Naive thymus-derived CD4-positive, alpha-beta T cell (primary cell): ENCODE measurements at regions of chr2 and their contacts with region 1.

Region 1: DNA sequence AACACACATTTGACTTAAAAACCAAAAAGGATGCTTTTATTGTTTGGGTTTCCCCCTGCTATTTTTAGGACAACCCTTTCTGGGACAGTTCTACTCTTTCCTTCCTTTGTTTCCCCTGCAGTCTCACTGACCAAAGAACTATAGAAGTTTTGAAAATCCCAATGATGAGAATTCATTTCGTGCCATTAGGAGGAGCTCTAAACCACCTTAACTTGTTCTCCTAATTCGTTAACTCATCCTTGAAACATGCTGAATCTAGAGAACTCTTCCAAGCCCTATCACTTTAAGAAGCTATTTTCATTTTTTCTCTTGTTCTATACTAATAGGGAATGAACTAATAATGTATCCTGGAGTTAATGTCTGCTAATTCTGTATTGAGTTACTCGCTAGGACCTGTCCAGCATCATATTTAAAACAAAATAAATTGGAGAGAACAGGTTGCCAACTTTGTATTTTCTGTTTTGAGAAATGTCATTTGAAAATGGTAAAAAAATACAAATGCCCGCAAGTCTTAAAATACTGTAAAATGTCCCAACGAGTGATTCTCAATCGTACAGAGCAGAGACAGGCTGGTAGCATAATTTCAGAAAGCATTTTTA is 62.9 kb downstream of the AFTPH start:
- DNase-seq: peak in 6 of 9 donors; percentile 30 to 55 (median 42)
- ATAC-seq: peak; percentile 72
- H3K4me3 ChIP-seq: no peak overlapping the region
- H3K4me3 Mint-ChIP-seq: no peak overlapping the region
- H3K27ac ChIP-seq: no peak overlapping the region
- H3K27ac Mint-ChIP-seq: peak overlapping the region in 1 of 9 donors; percentile 64
- H3K4me1 ChIP-seq: no peaks in the 10 kb centered on the region
- H3K4me1 Mint-ChIP-seq: peaks cover 0 to 14% (median 5%) of the 10 kb centered on the region in 7 donors
- H3K27me3 ChIP-seq: no peaks in the 10 kb centered on the region
- H3K27me3 Mint-ChIP-seq: no peaks in the 10 kb centered on the region

Region 2: GRCh38 chr2:63661076-63661475 is 925.9 kb before region 1 on chr2:
- CTCF ChIA-PET with region 1: no interaction called
- POLR2A ChIA-PET with region 1: no interaction called
- intact Hi-C with region 1: no loop called
- DNase-seq: no peak
- ATAC-seq: no peak
- H3K4me3 ChIP-seq: no peak overlapping the region
- H3K4me3 Mint-ChIP-seq: no peak overlapping the region
- H3K27ac ChIP-seq: no peak overlapping the region
- H3K27ac Mint-ChIP-seq: no peak overlapping the region
- H3K4me1 ChIP-seq: no peaks in the 10 kb centered on the region
- H3K4me1 Mint-ChIP-seq: peaks cover 0 to 3% (median 0%) of the 10 kb centered on the region in 7 donors
- H3K27me3 ChIP-seq: peaks cover 0 to 5% of the 10 kb centered on the region in 2 donors
- H3K27me3 Mint-ChIP-seq: peaks cover 6 to 28% (median 20%) of the 10 kb centered on the region in 5 donors

Region 3: GRCh38 chr2:64491426-64491825 is 95.6 kb before region 1 on chr2:
- CTCF ChIA-PET with region 1: no interaction called
- POLR2A ChIA-PET with region 1: no interaction called
- intact Hi-C with region 1: no loop called
- DNase-seq: no peak
- ATAC-seq: no peak
- H3K4me3 ChIP-seq: no peak overlapping the region
- H3K4me3 Mint-ChIP-seq: no peak overlapping the region
- H3K27ac ChIP-seq: no peak overlapping the region
- H3K27ac Mint-ChIP-seq: no peak overlapping the region
- H3K4me1 ChIP-seq: no peaks in the 10 kb centered on the region
- H3K4me1 Mint-ChIP-seq: peaks cover 3 to 14% (median 9%) of the 10 kb centered on the region in 7 donors
- H3K27me3 ChIP-seq: no peaks in the 10 kb centered on the region
- H3K27me3 Mint-ChIP-seq: peaks cover 0 to 42% (median 7%) of the 10 kb centered on the region in 5 donors

Region 4: DNA sequence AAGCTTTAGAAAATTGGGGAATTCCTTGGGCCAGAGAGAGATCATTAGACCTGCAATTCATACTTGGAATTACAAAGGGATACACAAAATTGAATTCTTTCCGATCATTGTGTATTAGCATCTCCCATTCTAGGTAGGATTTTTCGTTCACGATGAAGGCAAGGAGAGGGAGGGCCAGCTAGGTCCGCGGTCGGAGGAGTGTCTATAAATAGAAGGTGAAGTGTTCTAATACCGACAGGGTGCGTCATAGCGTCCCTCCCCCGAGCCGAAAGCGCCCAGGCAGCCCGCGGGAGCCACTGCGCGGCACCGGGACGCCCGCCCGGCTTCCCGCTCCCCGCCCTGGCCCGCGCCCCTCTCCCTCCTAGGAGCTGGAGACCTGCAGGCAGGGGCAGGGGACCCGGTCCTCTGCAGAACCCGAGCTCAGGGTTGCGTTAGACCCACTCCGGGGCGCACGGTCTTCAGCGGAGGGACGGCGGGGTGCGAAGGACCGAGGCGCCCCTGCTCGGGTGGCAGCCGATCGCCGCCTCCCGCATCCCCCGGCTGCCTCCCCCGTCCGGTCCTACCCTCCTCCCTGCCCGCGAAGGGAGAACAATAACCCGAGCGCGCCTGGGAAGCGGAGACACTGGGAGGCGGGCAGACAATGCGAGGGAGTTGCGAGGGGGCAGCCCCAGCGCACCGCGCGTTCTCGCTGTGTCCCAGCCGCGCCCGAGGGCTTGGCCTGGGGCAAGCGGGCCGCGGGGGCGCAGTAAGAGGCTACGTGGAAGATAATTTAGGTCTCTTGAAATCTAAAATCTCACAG is 180.9 kb after region 1 on chr2:
- CTCF ChIA-PET with region 1: no interaction called
- POLR2A ChIA-PET with region 1: interaction called, 3 read pairs
- intact Hi-C with region 1: loop called in 1 of 2 experiments (anchors 5 kb)
- DNase-seq: peak; percentile 35 to 78 (median 55)
- ATAC-seq: peak; percentile 89
- H3K4me3 ChIP-seq: peak overlapping the region; percentile 80
- H3K4me3 Mint-ChIP-seq: peak overlapping the region; percentile 90 to 99 (median 96)
- H3K27ac ChIP-seq: peak overlapping the region; percentile 73
- H3K27ac Mint-ChIP-seq: peak overlapping the region; percentile 92 to 97 (median 95)
- H3K4me1 ChIP-seq: peaks cover 3 to 12% of the 10 kb centered on the region in 2 donors
- H3K4me1 Mint-ChIP-seq: peaks cover 9 to 40% (median 23%) of the 10 kb centered on the region in 7 donors
- H3K27me3 ChIP-seq: no peaks in the 10 kb centered on the region
- H3K27me3 Mint-ChIP-seq: peaks cover 0 to 15% (median 0%) of the 10 kb centered on the region in 5 donors

Region 5: DNA sequence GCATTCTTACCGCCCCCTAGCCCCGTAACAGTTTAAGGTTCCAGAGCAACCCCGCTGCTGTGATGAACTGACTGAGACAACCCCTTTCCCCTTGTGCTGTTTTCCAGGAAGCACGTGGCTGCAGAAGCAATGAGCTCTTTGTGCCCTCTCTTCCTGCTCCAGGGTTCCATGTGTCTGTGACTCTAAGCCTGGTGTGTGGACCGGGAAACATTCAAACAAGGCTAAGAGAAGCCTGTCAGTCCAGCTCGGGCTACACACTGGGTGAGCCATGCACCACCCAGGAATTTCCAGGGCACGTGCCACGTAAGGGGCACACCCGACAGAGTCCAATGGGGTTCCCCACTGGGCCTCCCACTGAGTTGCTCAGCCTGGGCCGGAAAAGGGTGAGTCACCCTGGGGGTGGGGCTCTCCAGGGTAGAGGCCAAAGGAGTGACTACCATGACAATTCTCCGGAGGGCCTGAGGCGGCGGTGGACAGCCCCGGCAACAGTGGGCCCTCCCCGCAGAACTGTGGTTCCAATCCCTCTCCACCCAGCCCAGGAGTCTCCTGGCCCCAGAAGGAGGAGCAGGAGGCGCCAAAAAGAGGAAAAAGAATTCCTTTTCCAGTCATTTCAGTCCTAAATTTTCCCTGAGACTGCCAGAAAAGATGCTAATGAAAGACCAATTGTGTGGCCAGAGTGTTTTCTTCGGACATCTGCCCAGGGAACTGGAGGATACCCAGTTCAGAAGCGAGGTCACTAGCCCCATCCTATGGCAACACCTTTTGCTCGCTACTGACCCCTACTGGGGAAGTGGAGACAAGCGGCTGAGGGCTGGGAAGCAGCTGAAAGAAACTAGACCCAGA is 244.4 kb after region 1 on chr2:
- CTCF ChIA-PET with region 1: interaction called, 3 read pairs
- POLR2A ChIA-PET with region 1: no interaction called
- intact Hi-C with region 1: loop called (anchors 1 kb)
- DNase-seq: peak; percentile 61 to 89 (median 78)
- ATAC-seq: peak; percentile 95
- H3K4me3 ChIP-seq: peak overlapping the region; percentile 7
- H3K4me3 Mint-ChIP-seq: peak overlapping the region in 1 of 10 donors; percentile 8
- H3K27ac ChIP-seq: no peak overlapping the region
- H3K27ac Mint-ChIP-seq: peak overlapping the region in 1 of 9 donors; percentile 72
- H3K4me1 ChIP-seq: peaks cover 0 to 9% of the 10 kb centered on the region in 2 donors
- H3K4me1 Mint-ChIP-seq: peaks cover 0 to 25% (median 4%) of the 10 kb centered on the region in 7 donors
- H3K27me3 ChIP-seq: no peaks in the 10 kb centered on the region
- H3K27me3 Mint-ChIP-seq: peaks cover 0 to 9% (median 4%) of the 10 kb centered on the region in 5 donors

Region 6: GRCh38 chr2:64865073-64865830 is 278.3 kb after region 1 on chr2:
- CTCF ChIA-PET with region 1: interaction called, 21 read pairs
- POLR2A ChIA-PET with region 1: interaction called, 4 read pairs
- intact Hi-C with region 1: loop called (anchors 1 kb)
- DNase-seq: peak; percentile 30 to 82 (median 72)
- ATAC-seq: peak; percentile 87
- H3K4me3 ChIP-seq: peak overlapping the region; percentile 88
- H3K4me3 Mint-ChIP-seq: peak overlapping the region in 7 of 10 donors; percentile 72 to 86 (median 81)
- H3K27ac ChIP-seq: peak overlapping the region; percentile 40
- H3K27ac Mint-ChIP-seq: no peak overlapping the region
- H3K4me1 ChIP-seq: peaks cover 0 to 5% of the 10 kb centered on the region in 2 donors
- H3K4me1 Mint-ChIP-seq: peaks cover 0 to 5% (median 0%) of the 10 kb centered on the region in 7 donors
- H3K27me3 ChIP-seq: peaks cover 0 to 3% of the 10 kb centered on the region in 2 donors
- H3K27me3 Mint-ChIP-seq: peaks cover 0 to 17% (median 8%) of the 10 kb centered on the region in 5 donors

Region 7: DNA sequence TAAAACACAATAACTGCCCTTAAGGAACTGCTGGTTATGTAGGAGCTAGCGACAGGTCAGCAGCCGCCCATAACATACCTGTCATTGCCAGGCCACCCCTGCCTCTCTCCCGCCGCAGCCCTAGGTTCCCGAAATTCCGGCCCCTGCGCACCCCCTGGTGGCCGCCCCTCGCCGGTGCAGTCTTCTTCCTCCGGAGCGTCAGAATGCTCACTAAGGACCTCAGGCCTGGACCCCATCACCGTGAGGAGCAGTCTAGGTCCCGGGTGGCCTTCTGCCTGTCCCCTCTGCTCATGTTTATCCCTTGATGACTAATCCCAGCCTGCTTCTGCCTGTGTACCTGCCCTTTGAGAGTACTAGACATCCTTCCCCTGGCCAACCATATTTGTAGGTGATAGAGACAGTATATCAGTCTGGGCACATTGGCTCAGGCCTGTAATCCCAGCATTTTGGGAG is 286.5 kb after region 1 on chr2:
- CTCF ChIA-PET with region 1: interaction called, 5 read pairs
- POLR2A ChIA-PET with region 1: interaction called, 3 read pairs
- intact Hi-C with region 1: loop called (anchors 1 kb)
- DNase-seq: peak; percentile 51 to 87 (median 71)
- ATAC-seq: peak; percentile 93
- H3K4me3 ChIP-seq: no peak overlapping the region
- H3K4me3 Mint-ChIP-seq: peak overlapping the region in 6 of 10 donors; percentile 25 to 64 (median 46)
- H3K27ac ChIP-seq: no peak overlapping the region
- H3K27ac Mint-ChIP-seq: peak overlapping the region in 2 of 9 donors; percentile 46 to 63
- H3K4me1 ChIP-seq: peaks cover 0 to 3% of the 10 kb centered on the region in 2 donors
- H3K4me1 Mint-ChIP-seq: peaks cover 0 to 7% (median 7%) of the 10 kb centered on the region in 7 donors
- H3K27me3 ChIP-seq: no peaks in the 10 kb centered on the region
- H3K27me3 Mint-ChIP-seq: peaks cover 0 to 24% (median 4%) of the 10 kb centered on the region in 5 donors